ENCODE measurements at regions of chr3 and their contacts with region 1.

Region 1: GRCh38 chr3:187319699-187320302 is 28.3 kb upstream of the MASP1 start:
- DNase-seq: peak; percentile 78
- ATAC-seq: peak; percentile 88
- H3K4me3 Mint-ChIP-seq: no peak overlapping the region
- H3K27ac Mint-ChIP-seq: no peak overlapping the region
- H3K4me1 Mint-ChIP-seq: peaks cover 8% of the 10 kb centered on the region
- H3K27me3 Mint-ChIP-seq: peaks cover 30% of the 10 kb centered on the region

Region 2: DNA sequence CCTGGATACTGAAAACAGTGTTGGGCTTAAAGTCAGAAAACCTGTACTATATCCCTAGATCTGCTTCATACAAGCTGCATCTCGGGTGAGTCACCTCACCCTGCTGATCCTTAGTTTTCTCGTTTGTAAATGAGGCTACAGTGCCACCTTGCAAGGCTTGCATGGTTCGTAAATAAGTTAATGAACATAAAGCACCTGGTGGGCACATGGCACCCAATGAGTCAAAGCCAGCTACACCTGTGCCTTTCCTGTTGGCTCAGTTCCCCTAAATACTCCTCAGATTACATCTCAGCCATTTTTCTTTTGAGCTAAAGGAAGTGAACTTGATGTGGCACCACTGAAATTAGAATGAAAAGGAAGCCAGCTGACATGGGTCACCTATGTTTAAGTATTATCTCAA is 96.0 kb before region 1 on chr3:
- CTCF ChIA-PET with region 1: interaction called, 9 read pairs
- POLR2A ChIA-PET with region 1: no interaction called
- intact Hi-C with region 1: loop called (anchors 2 to 5 kb)
- DNase-seq: no peak
- ATAC-seq: no peak
- H3K4me3 Mint-ChIP-seq: no peak overlapping the region
- H3K27ac Mint-ChIP-seq: no peak overlapping the region
- H3K4me1 Mint-ChIP-seq: no peaks in the 10 kb centered on the region
- H3K27me3 Mint-ChIP-seq: peaks cover 3% of the 10 kb centered on the region

Region 3: GRCh38 chr3:187295316-187296034 is 24.3 kb before region 1 on chr3:
- CTCF ChIA-PET with region 1: no interaction called
- POLR2A ChIA-PET with region 1: no interaction called
- intact Hi-C with region 1: no loop called
- DNase-seq: no peak
- ATAC-seq: no peak
- H3K4me3 Mint-ChIP-seq: no peak overlapping the region
- H3K27ac Mint-ChIP-seq: no peak overlapping the region
- H3K4me1 Mint-ChIP-seq: peaks cover 6% of the 10 kb centered on the region
- H3K27me3 Mint-ChIP-seq: peaks cover 30% of the 10 kb centered on the region

Region 4: DNA sequence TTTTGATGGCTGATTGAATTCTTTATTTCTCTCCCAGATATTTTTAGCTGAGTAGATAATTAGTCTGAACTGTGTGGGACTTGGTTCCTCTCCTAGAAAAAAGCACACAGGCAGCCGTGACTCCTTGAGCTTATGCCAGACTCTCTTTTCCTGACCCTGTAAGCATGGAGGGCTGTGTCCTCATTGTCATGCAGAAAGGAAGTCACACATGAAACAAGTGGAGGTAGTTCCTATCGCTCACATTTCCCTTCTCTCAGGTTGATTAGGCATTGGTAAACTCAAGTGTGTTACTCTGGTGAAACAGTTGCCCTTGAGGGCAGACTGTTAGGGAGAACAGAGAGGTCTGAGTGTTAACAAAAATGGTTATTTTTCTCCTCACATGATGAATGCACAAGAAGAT is 42.0 kb after region 1 on chr3:
- CTCF ChIA-PET with region 1: interaction called, 12 read pairs
- POLR2A ChIA-PET with region 1: no interaction called
- intact Hi-C with region 1: no loop called
- DNase-seq: no peak
- ATAC-seq: peak; percentile 88
- H3K4me3 Mint-ChIP-seq: no peak overlapping the region
- H3K27ac Mint-ChIP-seq: no peak overlapping the region
- H3K4me1 Mint-ChIP-seq: peaks cover 7% of the 10 kb centered on the region
- H3K27me3 Mint-ChIP-seq: no peaks in the 10 kb centered on the region

Region 5: GRCh38 chr3:187516446-187517185 is 196.8 kb after region 1 on chr3:
- CTCF ChIA-PET with region 1: no interaction called
- POLR2A ChIA-PET with region 1: no interaction called
- intact Hi-C with region 1: no loop called
- DNase-seq: no peak
- ATAC-seq: no peak
- H3K4me3 Mint-ChIP-seq: no peak overlapping the region
- H3K27ac Mint-ChIP-seq: no peak overlapping the region
- H3K4me1 Mint-ChIP-seq: no peaks in the 10 kb centered on the region
- H3K27me3 Mint-ChIP-seq: peaks cover 2% of the 10 kb centered on the region

Region 6: DNA sequence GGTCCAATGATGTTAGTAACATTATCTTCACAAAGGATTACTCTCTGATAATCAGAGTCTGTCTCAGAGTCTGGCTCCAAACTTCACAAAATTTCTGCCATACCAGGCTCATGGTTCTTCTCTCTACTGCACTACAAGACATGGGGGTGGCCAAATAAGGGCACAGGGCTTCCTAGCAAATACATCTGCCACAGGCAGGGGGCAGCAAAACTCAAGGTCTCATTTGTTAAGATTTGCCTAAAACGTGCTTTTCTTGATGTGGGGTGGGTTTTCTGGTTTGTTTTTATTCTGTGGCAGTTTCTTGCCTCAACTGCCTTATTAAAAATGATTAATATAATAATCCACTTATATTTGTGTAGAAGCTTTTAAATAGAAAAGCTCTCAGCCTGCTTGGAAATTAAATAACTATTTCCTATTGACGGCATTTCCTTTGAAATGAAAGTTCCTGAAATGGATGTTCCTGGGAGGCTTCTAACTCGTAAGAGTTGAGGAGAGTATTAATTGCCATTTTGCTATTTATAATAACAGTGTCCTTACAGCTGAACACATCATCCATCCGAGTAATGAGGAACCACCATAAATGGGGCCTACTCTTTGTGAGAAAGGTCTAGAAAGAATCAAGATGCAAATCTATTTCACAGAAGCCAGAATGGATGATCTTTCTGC is 296.6 kb after region 1 on chr3:
- CTCF ChIA-PET with region 1: interaction called, 43 read pairs
- POLR2A ChIA-PET with region 1: no interaction called
- intact Hi-C with region 1: loop called (anchors 1 kb)
- DNase-seq: peak; percentile 80
- ATAC-seq: peak; percentile 71
- H3K4me3 Mint-ChIP-seq: no peak overlapping the region
- H3K27ac Mint-ChIP-seq: no peak overlapping the region
- H3K4me1 Mint-ChIP-seq: no peaks in the 10 kb centered on the region
- H3K27me3 Mint-ChIP-seq: peaks cover 8% of the 10 kb centered on the region

Region 7: GRCh38 chr3:187694801-187695200 is 375.0 kb after region 1 on chr3:
- CTCF ChIA-PET with region 1: interaction called, 10 read pairs
- POLR2A ChIA-PET with region 1: no interaction called
- intact Hi-C with region 1: no loop called
- DNase-seq: no peak
- ATAC-seq: no peak
- H3K4me3 Mint-ChIP-seq: no peak overlapping the region
- H3K27ac Mint-ChIP-seq: no peak overlapping the region
- H3K4me1 Mint-ChIP-seq: no peaks in the 10 kb centered on the region
- H3K27me3 Mint-ChIP-seq: peaks cover 20% of the 10 kb centered on the region

Region 8: GRCh38 chr3:189148081-189148507 is 1828.3 kb after region 1 on chr3:
- CTCF ChIA-PET with region 1: interaction called, 3 read pairs
- POLR2A ChIA-PET with region 1: no interaction called
- intact Hi-C with region 1: loop called in 1 of 2 experiments (anchors 5 kb)
- DNase-seq: peak; percentile 81
- ATAC-seq: peak; percentile 66
- H3K4me3 Mint-ChIP-seq: no peak overlapping the region
- H3K27ac Mint-ChIP-seq: no peak overlapping the region
- H3K4me1 Mint-ChIP-seq: peaks cover 17% of the 10 kb centered on the region
- H3K27me3 Mint-ChIP-seq: peaks cover 3% of the 10 kb centered on the region